Activated CD4-positive, alpha-beta T cell treated with anti-CD3 and anti-CD28 coated beads for 36 hours (primary cell): ENCODE measurements at regions of chr20 and their contacts with region 1.

Region 1: GRCh38 chr20:17536944-17537444 is 5.8 kb upstream of the BFSP1 start:
- DNase-seq: peak; percentile 78
- ATAC-seq: peak; percentile 92
- H3K4me3 Mint-ChIP-seq: no peak overlapping the region
- H3K27ac Mint-ChIP-seq: no peak overlapping the region
- H3K4me1 Mint-ChIP-seq: peaks cover 14% of the 10 kb centered on the region
- H3K27me3 Mint-ChIP-seq: peaks cover 11% of the 10 kb centered on the region

Region 2: DNA sequence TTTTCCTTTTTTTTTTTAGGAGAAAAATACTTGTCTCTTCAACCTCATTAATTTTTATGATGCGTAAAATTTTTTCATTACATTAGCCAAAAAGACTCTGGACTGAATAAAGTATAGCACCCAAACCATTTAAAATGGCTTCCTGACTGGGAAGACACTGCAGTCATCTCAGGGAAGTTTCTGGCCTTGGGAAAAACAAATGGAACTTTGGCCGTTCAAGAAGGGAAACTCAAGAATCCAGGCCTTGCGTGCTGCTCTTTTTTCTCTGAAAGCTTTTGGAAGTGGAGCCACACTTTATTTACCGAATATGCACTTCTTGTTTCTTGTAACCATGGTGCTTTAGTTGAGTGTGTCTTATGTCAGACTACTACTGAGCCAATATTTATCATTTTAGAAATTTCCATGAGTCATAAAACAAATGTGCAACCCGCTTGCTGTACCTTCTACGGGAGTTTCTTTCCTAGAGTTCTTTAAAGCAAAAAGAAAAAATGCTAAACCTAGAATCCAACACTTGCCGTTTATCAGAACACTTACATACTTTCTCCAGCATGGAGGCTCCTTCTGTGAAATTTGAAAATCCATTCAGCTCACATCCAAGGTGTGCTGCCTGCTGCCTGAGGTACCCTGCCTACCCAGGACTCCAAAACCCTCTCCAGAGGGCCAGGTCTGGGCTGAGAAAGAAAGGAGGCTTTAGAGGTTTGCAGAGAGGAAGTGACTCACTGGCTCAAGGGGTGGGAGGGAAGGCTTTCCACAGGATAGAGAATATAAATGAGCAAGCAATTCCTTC is 21.4 kb after region 1 on chr20:
- CTCF ChIA-PET with region 1: interaction called, 5 read pairs
- POLR2A ChIA-PET with region 1: interaction called, 3 read pairs
- intact Hi-C with region 1: loop called in 1 of 2 experiments (anchors 1 kb)
- DNase-seq: peak; percentile 57
- ATAC-seq: peak; percentile 81
- H3K4me3 Mint-ChIP-seq: no peak overlapping the region
- H3K27ac Mint-ChIP-seq: peak overlapping the region; percentile 71
- H3K4me1 Mint-ChIP-seq: peaks cover 41% of the 10 kb centered on the region
- H3K27me3 Mint-ChIP-seq: no peaks in the 10 kb centered on the region

Region 3: GRCh38 chr20:17617551-17618223 is 80.7 kb after region 1 on chr20:
- CTCF ChIA-PET with region 1: interaction called, 17 read pairs
- POLR2A ChIA-PET with region 1: no interaction called
- intact Hi-C with region 1: loop called (anchors 1 kb)
- DNase-seq: peak; percentile 72
- ATAC-seq: peak; percentile 71
- H3K4me3 Mint-ChIP-seq: no peak overlapping the region
- H3K27ac Mint-ChIP-seq: no peak overlapping the region
- H3K4me1 Mint-ChIP-seq: peaks cover 2% of the 10 kb centered on the region
- H3K27me3 Mint-ChIP-seq: no peaks in the 10 kb centered on the region

Region 4: GRCh38 chr20:17648791-17649730 is 112.1 kb after region 1 on chr20:
- CTCF ChIA-PET with region 1: interaction called, 3 read pairs
- POLR2A ChIA-PET with region 1: no interaction called
- intact Hi-C with region 1: loop called in 1 of 2 experiments (anchors 1 kb)
- DNase-seq: peak; percentile 60
- ATAC-seq: peak; percentile 66
- H3K4me3 Mint-ChIP-seq: no peak overlapping the region
- H3K27ac Mint-ChIP-seq: no peak overlapping the region
- H3K4me1 Mint-ChIP-seq: peaks cover 7% of the 10 kb centered on the region
- H3K27me3 Mint-ChIP-seq: no peaks in the 10 kb centered on the region

Region 5: GRCh38 chr20:17771206-17772004 is 234.4 kb after region 1 on chr20:
- CTCF ChIA-PET with region 1: no interaction called
- POLR2A ChIA-PET with region 1: no interaction called
- intact Hi-C with region 1: no loop called
- DNase-seq: no peak
- ATAC-seq: no peak
- H3K4me3 Mint-ChIP-seq: no peak overlapping the region
- H3K27ac Mint-ChIP-seq: no peak overlapping the region
- H3K4me1 Mint-ChIP-seq: no peaks in the 10 kb centered on the region
- H3K27me3 Mint-ChIP-seq: no peaks in the 10 kb centered on the region

Region 6: GRCh38 chr20:17898548-17898994 is 361.6 kb after region 1 on chr20:
- CTCF ChIA-PET with region 1: interaction called, 5 read pairs
- POLR2A ChIA-PET with region 1: no interaction called
- intact Hi-C with region 1: loop called (anchors 1 kb)
- DNase-seq: peak; percentile 80
- ATAC-seq: peak; percentile 47
- H3K4me3 Mint-ChIP-seq: no peak overlapping the region
- H3K27ac Mint-ChIP-seq: no peak overlapping the region
- H3K4me1 Mint-ChIP-seq: peaks cover 17% of the 10 kb centered on the region
- H3K27me3 Mint-ChIP-seq: peaks cover 27% of the 10 kb centered on the region